ENCODE measurements at regions of chr3 and their contacts with region 1.

Region 1: GRCh38 chr3:146166450-146167225 is 5.7 kb upstream of the PLOD2 start:
- DNase-seq: no peak
- H3K4me3 ChIP-seq: no peak overlapping the region
- CTCF ChIP-seq: no peak

Region 2: GRCh38 chr3:146072824-146073223 is 93.8 kb before region 1 on chr3:
- in situ Hi-C with region 1: loop called (anchors 5 kb)
- DNase-seq: no peak
- H3K4me3 ChIP-seq: no peak overlapping the region
- CTCF ChIP-seq: no peak

Measured in astrocyte of the cerebellum (primary cell).